ENCODE measurements at regions of chr11 and their contacts with region 1.

Region 1: DNA sequence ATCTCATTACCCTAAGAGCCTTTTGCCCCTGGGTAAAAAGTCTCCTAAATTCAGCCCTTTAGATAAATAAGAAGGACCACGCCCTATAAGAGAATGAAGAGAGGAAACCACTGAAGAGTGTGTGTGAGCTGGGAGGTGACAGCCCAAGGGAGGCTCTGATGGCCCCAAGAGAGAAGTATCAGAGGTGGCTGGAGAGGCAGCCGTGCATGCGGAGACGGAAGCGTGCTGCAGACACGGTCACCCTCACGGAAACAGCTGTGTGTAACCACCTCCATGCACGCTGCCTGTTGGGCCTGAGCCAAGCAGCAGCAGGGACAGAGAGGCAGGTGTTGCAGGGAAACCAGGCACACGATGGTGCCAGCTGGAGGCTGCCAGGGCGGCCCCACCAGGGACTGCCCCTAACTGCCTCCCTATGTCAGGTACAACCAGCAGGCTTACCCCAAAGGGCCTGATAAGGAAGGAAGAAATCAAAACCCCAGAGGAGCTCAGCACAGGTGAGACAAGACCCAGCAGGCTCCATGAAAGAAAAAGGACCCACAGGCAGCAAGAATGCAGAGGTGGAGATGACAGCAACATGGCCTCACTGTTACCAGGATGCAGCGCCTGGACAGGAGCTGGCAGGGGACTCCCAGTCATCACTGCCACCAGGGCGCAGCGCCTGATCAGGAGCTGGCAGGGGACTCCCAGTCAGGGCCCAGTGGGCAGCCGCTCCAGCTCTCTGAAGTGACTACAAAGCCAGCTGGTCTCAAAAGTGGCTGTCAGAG is 7.8 kb downstream of the LARGE2 start:
- DNase-seq: peak; percentile 94
- ATAC-seq: peak; percentile 77
- H3K4me3 ChIP-seq: peak overlapping the region; percentile 26 to 95 (median 79)
- H3K4me3 Mint-ChIP-seq: peak overlapping the region; percentile 95
- H3K27ac ChIP-seq: peak overlapping the region; percentile 92 to 93
- H3K27ac Mint-ChIP-seq: peak overlapping the region; percentile 92
- H3K4me1 ChIP-seq: peaks cover 65 to 84% of the 10 kb centered on the region in 2 donors
- H3K4me1 Mint-ChIP-seq: peaks cover 93% of the 10 kb centered on the region
- H3K27me3 ChIP-seq: no peaks in the 10 kb centered on the region
- H3K27me3 Mint-ChIP-seq: no peaks in the 10 kb centered on the region
- CTCF ChIP-seq: no peak

Region 2: DNA sequence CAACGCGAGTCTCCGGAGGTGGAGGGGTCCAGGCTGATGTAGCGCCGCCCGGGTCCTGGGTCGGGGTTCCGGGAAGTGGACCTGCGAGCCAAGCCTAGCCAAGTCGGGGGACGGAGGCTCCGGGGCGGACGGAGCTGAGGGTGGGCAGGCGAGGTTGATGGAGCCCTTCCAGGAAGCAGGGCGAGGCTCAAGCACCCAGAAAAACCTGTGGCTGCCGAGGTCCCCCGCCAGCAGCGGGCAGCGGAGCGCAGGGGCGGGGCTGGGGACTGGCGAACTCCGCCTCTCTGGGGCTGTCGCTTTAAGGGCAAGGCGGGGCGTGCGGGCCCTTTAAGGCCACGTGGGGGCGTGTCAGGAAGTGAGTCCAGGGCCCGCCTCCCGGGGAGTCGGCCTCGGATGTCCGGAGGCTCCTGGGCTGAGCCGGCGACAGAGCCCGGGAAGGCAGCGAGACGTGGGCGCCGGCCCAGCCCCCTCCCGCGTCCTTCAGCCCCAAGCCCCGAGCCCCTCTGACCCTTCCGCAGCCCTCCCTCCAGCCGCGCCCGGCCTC is 125.4 kb before region 1 on chr11 and contains the start of gene SLC35C1:
- CTCF ChIA-PET with region 1: no interaction called
- POLR2A ChIA-PET with region 1: interaction called, 5 read pairs
- intact Hi-C with region 1: loop called (anchors 5 kb)
- DNase-seq: peak; percentile 95
- ATAC-seq: peak; percentile 96
- H3K4me3 ChIP-seq: peak within 1 kb of the TSS; percentile 42 to 96 (median 92)
- H3K4me3 Mint-ChIP-seq: peak within 1 kb of the TSS; percentile 94
- H3K27ac ChIP-seq: peak within 1 kb of the TSS; percentile 62 to 67
- H3K27ac Mint-ChIP-seq: peak within 1 kb of the TSS; percentile 91
- H3K4me1 ChIP-seq: peaks cover 27 to 35% of the 10 kb centered on the region in 2 donors
- H3K4me1 Mint-ChIP-seq: peaks cover 41% of the 10 kb centered on the region
- H3K27me3 ChIP-seq: no peaks in the 10 kb centered on the region
- H3K27me3 Mint-ChIP-seq: no peaks in the 10 kb centered on the region
- CTCF ChIP-seq: no peak
- total RNA-seq, gene SLC35C1: 12.5 and 13.8 TPM in 2 replicates

Region 3: GRCh38 chr11:45899448-45900173 is 30.6 kb before region 1 on chr11:
- CTCF ChIA-PET with region 1: no interaction called
- POLR2A ChIA-PET with region 1: interaction called, 4 read pairs
- intact Hi-C with region 1: loop called (anchors 1 kb)
- DNase-seq: peak; percentile 89
- ATAC-seq: peak; percentile 82
- H3K4me3 ChIP-seq: peak overlapping the region in 4 of 5 experiments; percentile 37 to 59 (median 50)
- H3K4me3 Mint-ChIP-seq: peak overlapping the region; percentile 81
- H3K27ac ChIP-seq: peak overlapping the region in 1 of 2 donors; percentile 43
- H3K27ac Mint-ChIP-seq: peak overlapping the region; percentile 37
- H3K4me1 ChIP-seq: peaks cover 12 to 17% of the 10 kb centered on the region in 2 donors
- H3K4me1 Mint-ChIP-seq: peaks cover 12% of the 10 kb centered on the region
- H3K27me3 ChIP-seq: peaks cover 0 to 43% (median 21%) of the 10 kb centered on the region in 4 experiments
- H3K27me3 Mint-ChIP-seq: peaks cover 23% of the 10 kb centered on the region
- CTCF ChIP-seq: no peak

Region 4: DNA sequence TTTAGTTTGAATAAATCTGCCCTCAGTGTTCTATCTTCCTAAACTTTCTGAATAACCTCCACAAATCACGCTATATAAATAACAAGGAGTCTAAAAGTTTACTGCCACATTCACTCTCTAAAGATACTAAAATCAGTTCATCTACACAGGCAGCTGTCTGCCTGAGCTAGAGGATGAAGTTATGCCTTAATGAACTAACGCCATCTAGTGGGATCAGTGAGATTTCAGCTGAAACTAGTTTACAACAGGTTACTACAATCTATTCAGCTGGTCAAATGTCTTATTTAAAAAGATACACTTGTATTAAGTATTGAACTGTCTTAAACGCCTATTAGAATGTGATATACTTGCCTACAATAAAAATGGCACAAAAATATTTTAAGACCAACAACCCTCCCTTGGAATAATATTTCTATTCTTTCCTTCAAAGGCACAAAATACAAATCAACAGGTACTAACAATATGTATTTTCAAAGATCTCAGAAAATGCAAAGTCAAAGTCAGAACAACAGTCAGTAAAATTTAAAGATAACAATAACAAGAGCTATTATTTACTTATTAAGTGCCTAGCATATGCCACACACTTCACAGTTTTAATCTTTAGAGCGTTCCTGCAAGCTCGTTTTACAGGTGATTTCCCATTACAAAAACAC is 76.3 kb after region 1 on chr11:
- CTCF ChIA-PET with region 1: interaction called, 17 read pairs
- POLR2A ChIA-PET with region 1: no interaction called
- intact Hi-C with region 1: loop called (anchors 5 kb)
- DNase-seq: peak; percentile 79
- ATAC-seq: peak; percentile 82
- H3K4me3 ChIP-seq: no peak overlapping the region
- H3K4me3 Mint-ChIP-seq: no peak overlapping the region
- H3K27ac ChIP-seq: no peak overlapping the region
- H3K27ac Mint-ChIP-seq: no peak overlapping the region
- H3K4me1 ChIP-seq: no peaks in the 10 kb centered on the region
- H3K4me1 Mint-ChIP-seq: peaks cover 1% of the 10 kb centered on the region
- H3K27me3 ChIP-seq: no peaks in the 10 kb centered on the region
- H3K27me3 Mint-ChIP-seq: no peaks in the 10 kb centered on the region
- CTCF ChIP-seq: peak; percentile 84

Region 5: DNA sequence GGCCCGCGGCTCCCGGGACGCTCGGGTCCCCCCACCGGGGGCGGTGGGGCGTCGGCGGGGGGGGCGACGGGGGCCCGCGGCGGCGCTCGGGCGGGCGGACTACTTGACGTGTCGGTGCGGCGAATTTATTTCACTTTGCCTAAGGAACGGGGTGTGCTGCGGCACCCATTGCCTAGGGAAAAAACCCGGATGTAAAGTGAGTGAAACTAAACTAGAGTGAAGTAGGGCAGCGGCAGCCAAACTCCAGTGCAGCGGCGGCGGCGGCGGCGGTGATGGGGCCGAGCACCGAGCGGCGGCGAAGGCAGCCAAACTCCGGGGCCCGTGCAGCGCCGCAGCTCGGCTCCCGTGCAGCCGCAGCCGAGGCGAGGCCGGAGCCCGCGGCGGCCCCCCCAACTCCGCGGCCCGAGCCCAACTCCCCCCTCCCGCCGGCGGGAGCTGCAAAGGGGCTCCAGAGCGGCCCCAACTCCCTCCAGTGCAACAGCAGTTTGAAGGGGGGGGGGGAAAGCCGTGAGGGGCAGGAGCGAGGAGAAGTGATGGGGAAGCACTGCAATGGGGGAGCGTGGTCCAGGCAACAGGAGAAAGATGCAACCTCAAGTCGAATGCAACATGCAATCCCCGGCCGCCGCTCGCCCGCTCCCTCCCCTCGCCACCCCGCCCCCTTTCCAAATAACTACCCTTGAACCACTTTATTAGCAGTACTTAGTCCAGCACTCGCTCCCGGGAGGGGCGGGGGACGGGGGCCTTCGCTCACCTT is 191.7 kb after region 1 on chr11:
- CTCF ChIA-PET with region 1: no interaction called
- POLR2A ChIA-PET with region 1: interaction called, 3 read pairs
- intact Hi-C with region 1: loop called (anchors 2 kb)
- DNase-seq: peak; percentile 91
- ATAC-seq: peak; percentile 47
- H3K4me3 ChIP-seq: peak overlapping the region; percentile 38 to 89 (median 78)
- H3K4me3 Mint-ChIP-seq: peak overlapping the region; percentile 93
- H3K27ac ChIP-seq: peak overlapping the region in 1 of 2 donors; percentile 61
- H3K27ac Mint-ChIP-seq: peak overlapping the region; percentile 97
- H3K4me1 ChIP-seq: peaks cover 21 to 22% of the 10 kb centered on the region in 2 donors
- H3K4me1 Mint-ChIP-seq: peaks cover 29% of the 10 kb centered on the region
- H3K27me3 ChIP-seq: no peaks in the 10 kb centered on the region
- H3K27me3 Mint-ChIP-seq: no peaks in the 10 kb centered on the region
- CTCF ChIP-seq: no peak